Activated CD4-positive, alpha-beta T cell treated with anti-CD3 and anti-CD28 coated beads for 36 hours (primary cell): ENCODE measurements at regions of chr12 and their contacts with region 1.

Region 1: DNA sequence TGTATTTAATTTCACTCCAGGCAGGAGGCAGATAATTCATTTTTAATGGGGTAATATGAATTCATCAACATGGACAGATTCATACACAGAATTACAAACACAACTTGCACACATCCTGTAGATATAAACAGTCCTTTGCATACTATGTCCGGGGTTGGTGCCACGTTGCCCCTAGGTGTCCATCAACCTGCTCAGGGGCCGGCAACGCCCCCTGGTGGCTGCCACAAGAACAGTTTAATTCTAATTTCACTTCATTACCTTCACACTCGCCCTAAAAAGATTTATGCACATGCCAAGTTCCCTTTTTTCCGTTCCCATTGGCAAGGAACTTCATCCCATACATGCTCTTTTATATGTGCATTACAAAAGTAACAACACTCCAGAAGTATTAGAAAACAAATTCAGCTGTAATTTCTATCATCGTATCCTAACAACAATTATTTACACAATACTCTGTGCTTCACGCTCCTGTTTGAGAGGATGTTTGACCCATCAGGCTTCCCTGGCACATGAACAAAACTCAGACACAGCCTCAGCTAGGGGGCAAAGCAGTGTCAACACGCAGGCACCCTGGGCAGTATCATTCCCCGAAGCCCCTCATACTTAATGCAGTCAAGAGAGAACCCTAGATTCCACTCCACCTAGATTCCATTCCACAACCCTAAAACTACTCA is 15.5 kb downstream of the MANSC1 start:
- DNase-seq: peak; percentile 82
- ATAC-seq: peak; percentile 87
- H3K4me3 Mint-ChIP-seq: no peak overlapping the region
- H3K27ac Mint-ChIP-seq: no peak overlapping the region
- H3K4me1 Mint-ChIP-seq: peaks cover 30% of the 10 kb centered on the region
- H3K27me3 Mint-ChIP-seq: no peaks in the 10 kb centered on the region

Region 2: GRCh38 chr12:11553871-11554533 is 780.5 kb before region 1 on chr12:
- CTCF ChIA-PET with region 1: interaction called, 5 read pairs
- POLR2A ChIA-PET with region 1: no interaction called
- intact Hi-C with region 1: loop called in 1 of 2 experiments (anchors 10 kb)
- DNase-seq: peak; percentile 76
- ATAC-seq: peak; percentile 79
- H3K4me3 Mint-ChIP-seq: no peak overlapping the region
- H3K27ac Mint-ChIP-seq: no peak overlapping the region
- H3K4me1 Mint-ChIP-seq: peaks cover 28% of the 10 kb centered on the region
- H3K27me3 Mint-ChIP-seq: no peaks in the 10 kb centered on the region

Region 3: DNA sequence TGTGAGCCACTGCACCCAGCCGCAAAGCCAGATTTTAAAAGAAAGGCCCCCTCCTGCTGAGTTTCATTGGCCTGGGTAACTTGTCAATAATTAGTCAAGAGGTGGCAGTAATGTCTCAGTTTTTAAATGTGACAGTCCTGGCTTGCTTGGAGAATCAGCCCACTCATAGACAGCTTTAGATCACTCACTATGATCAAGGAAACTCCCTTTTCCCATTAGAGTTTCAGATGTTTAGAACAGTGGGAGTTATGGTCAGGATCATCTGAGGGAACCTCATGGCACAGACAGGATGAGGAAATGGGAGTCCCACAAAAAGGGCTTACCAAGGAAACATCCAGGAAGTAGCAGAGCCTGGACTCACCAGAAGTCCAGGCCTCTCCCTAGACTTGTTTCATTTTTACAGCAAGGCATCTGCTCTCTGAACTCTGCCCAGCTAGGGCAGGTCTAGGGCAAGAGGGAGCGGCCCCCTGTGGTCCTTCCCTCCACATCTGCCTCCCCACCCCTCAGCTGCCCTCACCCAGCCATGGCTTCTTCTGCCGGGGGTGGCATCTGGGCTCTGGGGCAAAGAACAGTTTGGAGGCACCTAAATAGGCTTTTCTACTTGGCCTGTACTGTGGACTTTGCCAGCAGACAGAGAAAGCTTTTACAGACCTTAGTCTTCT is 252.5 kb before region 1 on chr12:
- CTCF ChIA-PET with region 1: interaction called, 43 read pairs
- POLR2A ChIA-PET with region 1: no interaction called
- intact Hi-C with region 1: loop called (anchors 1 kb)
- DNase-seq: peak; percentile 11
- ATAC-seq: peak; percentile 83
- H3K4me3 Mint-ChIP-seq: no peak overlapping the region
- H3K27ac Mint-ChIP-seq: no peak overlapping the region
- H3K4me1 Mint-ChIP-seq: no peaks in the 10 kb centered on the region
- H3K27me3 Mint-ChIP-seq: no peaks in the 10 kb centered on the region

Region 4: DNA sequence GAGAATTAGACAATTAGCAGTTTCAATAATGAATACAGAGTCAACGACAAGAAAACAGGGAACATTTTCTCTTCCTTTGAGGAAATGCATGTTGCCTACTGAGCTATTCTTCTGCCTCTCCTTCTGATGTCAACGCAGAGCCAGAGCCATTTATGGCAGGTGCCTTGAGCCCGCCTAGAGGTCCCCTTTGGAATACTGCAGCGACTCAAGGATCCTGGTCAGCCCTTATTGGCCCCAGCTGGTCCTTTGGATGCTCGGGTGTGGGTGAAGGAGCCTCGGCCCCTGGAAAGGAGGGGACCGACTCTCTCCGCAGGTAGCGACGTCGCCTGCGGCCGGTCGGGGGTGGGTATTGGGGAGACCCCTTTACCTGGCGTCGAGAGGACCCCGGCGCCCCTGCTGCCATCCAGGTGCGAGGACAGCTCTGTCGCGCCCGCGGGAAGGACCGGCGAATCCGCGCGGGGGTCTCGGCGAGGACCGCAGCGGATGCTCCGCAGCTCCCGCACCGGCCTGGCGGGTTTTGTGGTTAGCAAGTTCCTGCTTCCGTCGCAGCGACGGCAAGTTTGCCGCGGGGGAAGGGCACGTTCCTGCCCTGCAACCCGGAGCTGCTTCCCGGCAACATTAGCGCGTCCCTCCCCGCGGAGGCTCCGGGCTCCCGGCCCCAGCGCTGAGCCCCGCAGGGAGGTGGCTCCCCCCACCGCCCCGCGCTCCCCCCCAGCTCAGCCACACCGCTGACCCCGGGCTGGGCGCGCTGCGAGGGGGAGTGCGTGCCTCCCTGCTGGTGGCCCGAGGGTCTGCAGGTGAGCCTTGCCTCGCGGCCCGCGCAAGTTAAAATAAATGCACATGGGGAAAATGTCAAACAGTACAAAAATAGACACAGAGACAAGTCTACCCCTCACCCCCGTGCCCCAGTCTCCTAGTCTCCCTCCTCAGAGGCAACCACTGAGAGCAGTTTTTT is 15.5 kb after region 1 on chr12 and contains the start of gene MANSC1:
- CTCF ChIA-PET with region 1: interaction called, 19 read pairs
- POLR2A ChIA-PET with region 1: no interaction called
- intact Hi-C with region 1: no loop called
- DNase-seq: peak; percentile 76
- ATAC-seq: peak; percentile 77
- H3K4me3 Mint-ChIP-seq: peak within 1 kb of the TSS; percentile 62
- H3K27ac Mint-ChIP-seq: peak within 1 kb of the TSS; percentile 45
- H3K4me1 Mint-ChIP-seq: peaks cover 26% of the 10 kb centered on the region
- H3K27me3 Mint-ChIP-seq: no peaks in the 10 kb centered on the region
- total RNA-seq, gene MANSC1: 2.2 to 2.5 TPM

Region 5: GRCh38 chr12:12415886-12416285 is 81.4 kb after region 1 on chr12:
- CTCF ChIA-PET with region 1: no interaction called
- POLR2A ChIA-PET with region 1: no interaction called
- intact Hi-C with region 1: no loop called
- DNase-seq: no peak
- ATAC-seq: peak; percentile 39
- H3K4me3 Mint-ChIP-seq: no peak overlapping the region
- H3K27ac Mint-ChIP-seq: peak overlapping the region; percentile 37
- H3K4me1 Mint-ChIP-seq: peaks cover 18% of the 10 kb centered on the region
- H3K27me3 Mint-ChIP-seq: no peaks in the 10 kb centered on the region